ENCODE measurements at regions of chr13 and their contacts with region 1.

Region 1: DNA sequence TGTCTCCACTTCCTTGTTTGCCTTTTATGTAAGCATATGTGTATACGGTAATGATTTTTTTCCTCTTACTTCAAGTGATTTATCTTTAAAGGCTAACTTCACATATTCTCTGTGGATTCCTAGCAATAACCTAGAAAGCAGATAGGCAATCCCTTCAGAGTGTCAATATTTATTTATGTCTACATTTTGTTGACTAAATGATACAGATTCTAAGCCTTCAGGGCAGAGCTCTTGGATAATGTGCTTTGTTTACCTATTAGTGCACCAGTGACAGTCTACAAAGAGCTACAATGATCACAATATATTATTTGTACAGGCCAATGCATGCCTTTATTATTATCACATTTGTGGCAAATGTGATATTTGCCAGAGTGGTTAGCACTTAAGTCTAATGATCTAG is 406.2 kb downstream of the EFNB2 start:
- DNase-seq: peak in 1 of 2 experiments; percentile 57
- H3K4me3 ChIP-seq: no peak overlapping the region
- H3K4me3 Mint-ChIP-seq: peak overlapping the region; percentile 9
- H3K27ac Mint-ChIP-seq: peak overlapping the region; percentile 68
- H3K4me1 ChIP-seq: peaks cover 41% of the 10 kb centered on the region
- H3K4me1 Mint-ChIP-seq: peaks cover 32% of the 10 kb centered on the region
- H3K27me3 ChIP-seq: no peaks in the 10 kb centered on the region
- H3K27me3 Mint-ChIP-seq: no peaks in the 10 kb centered on the region
- CTCF ChIP-seq: no peak

Region 2: GRCh38 chr13:106078191-106078590 is 51.1 kb before region 1 on chr13:
- CTCF ChIA-PET with region 1: no interaction called
- POLR2A ChIA-PET with region 1: no interaction called
- intact Hi-C with region 1: loop called (anchors 1 kb)
- DNase-seq: peak; percentile 53 to 64
- H3K4me3 ChIP-seq: no peak overlapping the region
- H3K4me3 Mint-ChIP-seq: peak overlapping the region; percentile 58
- H3K27ac Mint-ChIP-seq: peak overlapping the region; percentile 84
- H3K4me1 ChIP-seq: peaks cover 30% of the 10 kb centered on the region
- H3K4me1 Mint-ChIP-seq: peaks cover 31% of the 10 kb centered on the region
- H3K27me3 ChIP-seq: no peaks in the 10 kb centered on the region
- H3K27me3 Mint-ChIP-seq: no peaks in the 10 kb centered on the region
- CTCF ChIP-seq: no peak

Region 3: DNA sequence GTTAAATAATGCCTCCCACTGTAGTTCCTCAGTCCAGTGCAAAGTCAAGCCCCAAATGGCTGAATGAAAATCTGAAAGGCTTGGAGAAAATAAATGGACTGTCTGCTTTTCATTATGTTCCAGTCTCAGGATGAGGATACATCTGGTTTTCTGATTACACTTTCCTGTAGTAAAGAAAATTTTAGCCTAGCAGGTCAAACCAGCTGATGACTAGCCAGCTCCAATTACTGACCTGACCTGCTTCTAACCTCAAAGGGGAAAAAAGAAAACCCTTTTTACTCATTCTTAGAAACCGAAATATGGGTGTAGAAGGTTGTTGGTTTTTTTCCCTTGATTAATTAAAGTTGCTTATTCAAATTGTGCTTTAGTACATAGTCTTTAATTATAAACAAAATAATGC is 12.2 kb before region 1 on chr13:
- CTCF ChIA-PET with region 1: no interaction called
- POLR2A ChIA-PET with region 1: no interaction called
- intact Hi-C with region 1: loop called (anchors 1 kb)
- DNase-seq: no peak
- H3K4me3 ChIP-seq: no peak overlapping the region
- H3K4me3 Mint-ChIP-seq: no peak overlapping the region
- H3K27ac Mint-ChIP-seq: no peak overlapping the region
- H3K4me1 ChIP-seq: peaks cover 19% of the 10 kb centered on the region
- H3K4me1 Mint-ChIP-seq: peaks cover 19% of the 10 kb centered on the region
- H3K27me3 ChIP-seq: no peaks in the 10 kb centered on the region
- H3K27me3 Mint-ChIP-seq: no peaks in the 10 kb centered on the region
- CTCF ChIP-seq: no peak

Measured in Caco-2 (cell line).